Heart right ventricle (tissue), 16 donors: ENCODE measurements at regions of chr10 and their contacts with region 1.

Region 1: DNA sequence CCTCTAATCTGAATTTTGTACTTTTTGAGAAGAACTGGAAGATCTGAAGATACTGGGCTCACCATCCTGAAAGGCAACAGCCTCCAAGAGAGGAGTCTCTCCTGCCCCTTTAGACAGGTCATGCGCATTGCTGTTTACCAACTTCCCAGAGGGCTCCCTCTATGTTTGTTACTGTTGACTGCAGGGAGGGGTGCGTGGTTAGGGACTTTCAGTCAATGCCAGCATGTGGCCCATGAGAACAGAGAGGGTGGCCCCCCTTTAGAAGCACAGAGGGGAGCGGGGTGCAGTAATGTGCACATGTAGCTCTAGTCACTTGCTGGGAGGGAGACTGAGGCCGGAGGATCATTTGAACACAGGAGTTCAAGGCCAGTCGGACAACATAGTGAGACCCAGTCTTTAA is 33.1 kb upstream of the CABCOCO1 start:
- DNase-seq: no peak
- ATAC-seq: no peak
- H3K4me3 ChIP-seq: no peak overlapping the region
- H3K27ac ChIP-seq: no peak overlapping the region
- H3K4me1 ChIP-seq: no peaks in the 10 kb centered on the region
- H3K27me3 ChIP-seq: peaks cover 0 to 5% (median 0%) of the 10 kb centered on the region in 7 donors
- CTCF ChIP-seq: no peak

Region 2: DNA sequence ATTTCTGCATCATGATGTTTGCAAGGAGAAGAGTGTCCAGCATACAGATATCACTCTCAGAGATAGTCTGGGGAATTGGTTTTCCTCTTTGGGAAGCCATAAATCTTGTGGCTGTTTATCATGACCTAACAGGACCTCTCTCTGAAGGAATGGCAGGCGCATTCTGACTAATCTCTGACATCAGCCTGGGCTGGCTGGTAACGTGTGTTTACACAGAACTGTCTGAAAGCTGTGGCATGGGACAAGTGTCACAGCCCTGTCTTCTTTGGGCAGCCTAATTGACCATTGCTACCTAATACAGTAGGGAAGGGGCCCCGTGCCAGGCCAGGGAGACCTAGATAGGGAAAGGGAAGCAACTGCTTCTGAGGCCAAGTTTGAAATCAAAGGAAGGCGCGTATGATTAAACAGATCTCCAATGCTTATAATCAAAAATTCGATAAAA is 40.8 kb before region 1 on chr10:
- intact Hi-C with region 1: loop called in 1 of 10 experiments (anchors 2 kb)
- DNase-seq: no peak
- ATAC-seq: no peak
- H3K4me3 ChIP-seq: no peak overlapping the region
- H3K27ac ChIP-seq: no peak overlapping the region
- H3K4me1 ChIP-seq: no peaks in the 10 kb centered on the region
- H3K27me3 ChIP-seq: no peaks in the 10 kb centered on the region
- CTCF ChIP-seq: no peak

Region 3: GRCh38 chr10:61688551-61689308 is 59.1 kb after region 1 on chr10:
- intact Hi-C with region 1: no loop called
- DNase-seq: no peak
- ATAC-seq: no peak
- H3K4me3 ChIP-seq: no peak overlapping the region
- H3K27ac ChIP-seq: no peak overlapping the region
- H3K4me1 ChIP-seq: no peaks in the 10 kb centered on the region
- H3K27me3 ChIP-seq: no peaks in the 10 kb centered on the region
- CTCF ChIP-seq: no peak